ENCODE measurements at regions of chr4 and their contacts with region 1.

Region 1: DNA sequence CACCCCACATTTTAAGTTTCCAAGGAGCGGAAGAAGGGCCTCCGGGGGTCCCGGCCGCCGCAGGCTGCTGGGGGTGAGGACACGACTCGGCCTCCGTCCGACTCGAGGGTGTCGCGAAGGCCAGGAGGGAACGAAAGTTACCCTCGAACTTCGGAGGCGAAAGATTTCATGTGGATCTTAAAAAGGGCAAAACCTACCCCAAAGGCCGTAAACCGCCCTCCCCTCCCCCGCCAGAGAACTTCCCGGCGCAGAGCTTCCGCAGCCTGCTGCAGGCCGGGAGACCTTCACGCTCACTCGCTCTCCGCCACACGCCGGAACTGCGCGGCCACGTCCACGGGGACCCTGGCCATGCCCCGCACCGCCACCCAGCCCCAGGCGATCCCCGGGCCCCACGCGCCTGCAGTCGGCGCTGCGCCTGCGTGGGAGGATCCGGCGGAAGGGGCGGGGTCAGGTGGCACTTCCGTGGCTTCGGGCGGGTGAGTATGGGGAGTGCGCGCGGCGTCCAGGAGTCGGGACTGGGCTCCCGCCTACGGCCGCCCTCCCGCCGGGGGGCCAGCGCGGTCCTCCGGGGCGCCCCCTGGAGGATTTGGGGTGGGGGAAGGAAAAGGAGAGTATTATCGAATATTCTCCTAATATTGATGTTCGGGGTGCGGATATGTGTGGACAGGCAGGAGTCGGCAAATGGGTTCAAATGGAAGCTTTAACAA is at the start of gene MMAA:
- DNase-seq: peak; percentile 91
- ATAC-seq: peak; percentile 95
- H3K4me3 ChIP-seq: peak within 1 kb of the TSS; percentile 65
- H3K27ac ChIP-seq: peak within 1 kb of the TSS; percentile 93
- H3K4me1 ChIP-seq: no peaks in the 10 kb centered on the region; the same call in 1 of the 2 replicates
- H3K27me3 ChIP-seq: no peaks in the 10 kb centered on the region
- CTCF ChIP-seq: peak; percentile 70
- POLR2A ChIP-seq: peak; percentile 90
- RAD21 ChIP-seq: peak; percentile 46
- total RNA-seq, gene MMAA: 5.2 and 7.8 TPM in 2 replicates

Region 2: DNA sequence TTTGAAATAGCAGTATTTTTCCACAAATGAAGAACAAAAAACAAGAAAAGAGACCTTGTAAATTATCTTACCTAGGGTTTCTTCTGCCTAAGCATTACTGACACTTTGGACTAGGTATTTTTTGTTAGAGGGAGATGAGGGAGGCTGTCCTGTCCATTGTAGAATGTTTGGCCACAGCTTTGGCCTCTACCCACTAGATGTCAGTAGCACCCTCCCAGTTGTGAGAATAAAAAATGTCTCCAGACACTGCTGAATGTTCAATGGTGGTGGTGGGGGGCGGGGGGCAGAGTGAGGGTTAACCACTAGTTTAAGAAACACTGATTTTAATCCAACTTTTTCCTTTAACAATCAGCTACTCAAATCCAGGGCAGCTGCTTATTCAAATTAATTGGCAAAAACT is 464.5 kb before region 1 on chr4:
- CTCF ChIA-PET with region 1: no interaction called
- POLR2A ChIA-PET with region 1: no interaction called
- dilution Hi-C with region 1: no loop called
- in situ Hi-C with region 1: no loop called
- intact Hi-C with region 1: loop called (anchors 1 kb)
- DNase-seq: peak; percentile 35
- ATAC-seq: peak; percentile 77
- H3K4me3 ChIP-seq: no peak overlapping the region
- H3K27ac ChIP-seq: no peak overlapping the region
- H3K4me1 ChIP-seq: no peaks in the 10 kb centered on the region
- H3K27me3 ChIP-seq: no peaks in the 10 kb centered on the region
- CTCF ChIP-seq: peak; percentile 50
- POLR2A ChIP-seq: no peak
- RAD21 ChIP-seq: peak; percentile 60

Region 3: GRCh38 chr4:145216535-145216934 is 402.6 kb before region 1 on chr4:
- CTCF ChIA-PET with region 1: interaction called, 18 read pairs
- POLR2A ChIA-PET with region 1: no interaction called
- dilution Hi-C with region 1: no loop called
- in situ Hi-C with region 1: loop called (anchors 25 kb)
- intact Hi-C with region 1: no loop called
- DNase-seq: peak; percentile 44
- ATAC-seq: no peak
- H3K4me3 ChIP-seq: no peak overlapping the region
- H3K27ac ChIP-seq: no peak overlapping the region
- H3K4me1 ChIP-seq: no peaks in the 10 kb centered on the region
- H3K27me3 ChIP-seq: peaks cover 3% of the 10 kb centered on the region; the same call in 1 of the 2 replicates
- CTCF ChIP-seq: peak; percentile 79
- POLR2A ChIP-seq: no peak
- RAD21 ChIP-seq: peak; percentile 84

Region 4: DNA sequence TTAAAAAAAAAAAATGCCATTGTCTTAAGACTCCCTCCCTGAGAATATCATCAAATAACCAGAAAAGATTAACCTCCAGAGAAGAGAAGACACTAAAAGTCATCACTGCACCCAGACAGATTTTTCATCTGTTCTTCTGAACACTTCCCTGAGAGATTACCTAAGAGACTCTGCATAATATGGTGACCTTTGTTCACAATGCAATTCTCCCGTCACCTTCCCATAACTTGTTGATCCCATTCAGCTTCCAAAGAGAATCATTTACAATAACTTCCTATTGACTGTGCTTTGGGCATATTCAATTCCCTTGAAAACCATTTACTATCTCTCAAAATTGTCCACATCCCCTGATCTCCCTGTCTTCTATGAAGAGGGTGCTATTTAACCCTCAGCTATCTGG is 222.5 kb before region 1 on chr4:
- CTCF ChIA-PET with region 1: no interaction called
- POLR2A ChIA-PET with region 1: no interaction called
- dilution Hi-C with region 1: no loop called
- in situ Hi-C with region 1: no loop called
- intact Hi-C with region 1: no loop called
- DNase-seq: no peak
- ATAC-seq: no peak
- H3K4me3 ChIP-seq: no peak overlapping the region
- H3K27ac ChIP-seq: no peak overlapping the region
- H3K4me1 ChIP-seq: no peaks in the 10 kb centered on the region
- H3K27me3 ChIP-seq: no peaks in the 10 kb centered on the region
- CTCF ChIP-seq: no peak
- POLR2A ChIP-seq: no peak
- RAD21 ChIP-seq: no peak

Region 5: GRCh38 chr4:145732895-145733880 is 114.1 kb after region 1 on chr4:
- CTCF ChIA-PET with region 1: no interaction called
- POLR2A ChIA-PET with region 1: no interaction called
- dilution Hi-C with region 1: no loop called
- in situ Hi-C with region 1: no loop called
- intact Hi-C with region 1: loop called (anchors 1 kb)
- DNase-seq: peak; percentile 89
- ATAC-seq: peak; percentile 80
- H3K4me3 ChIP-seq: peak overlapping the region; percentile 57
- H3K27ac ChIP-seq: peak overlapping the region; percentile 92
- H3K4me1 ChIP-seq: peaks cover 28% of the 10 kb centered on the region
- H3K27me3 ChIP-seq: no peaks in the 10 kb centered on the region
- CTCF ChIP-seq: no peak
- POLR2A ChIP-seq: peak; percentile 75
- RAD21 ChIP-seq: no peak

Region 6: DNA sequence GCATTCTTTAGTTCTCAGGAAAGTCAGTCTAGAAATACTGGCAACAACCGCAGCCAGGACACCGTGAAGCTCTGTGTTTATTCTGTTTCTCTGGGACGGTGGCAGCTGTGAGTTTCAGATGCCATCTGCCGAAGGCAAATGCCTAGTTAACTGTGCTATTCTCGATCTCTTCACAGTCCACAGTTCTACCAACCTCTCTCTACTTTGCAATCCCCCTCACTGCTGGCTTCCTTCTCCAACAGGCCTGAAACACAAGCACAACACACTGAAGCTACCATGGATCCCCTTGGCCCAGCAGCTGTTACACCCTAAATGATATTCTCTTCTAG is 200.7 kb after region 1 on chr4:
- CTCF ChIA-PET with region 1: no interaction called
- POLR2A ChIA-PET with region 1: interaction called, 4 read pairs
- dilution Hi-C with region 1: no loop called
- in situ Hi-C with region 1: no loop called
- intact Hi-C with region 1: loop called (anchors 5 kb)
- DNase-seq: no peak
- ATAC-seq: no peak
- H3K4me3 ChIP-seq: no peak overlapping the region
- H3K27ac ChIP-seq: peak overlapping the region; percentile 62; the same call in 1 of the 2 replicates
- H3K4me1 ChIP-seq: peaks cover 23% of the 10 kb centered on the region
- H3K27me3 ChIP-seq: no peaks in the 10 kb centered on the region
- CTCF ChIP-seq: no peak
- POLR2A ChIP-seq: no peak
- RAD21 ChIP-seq: no peak

Region 7: DNA sequence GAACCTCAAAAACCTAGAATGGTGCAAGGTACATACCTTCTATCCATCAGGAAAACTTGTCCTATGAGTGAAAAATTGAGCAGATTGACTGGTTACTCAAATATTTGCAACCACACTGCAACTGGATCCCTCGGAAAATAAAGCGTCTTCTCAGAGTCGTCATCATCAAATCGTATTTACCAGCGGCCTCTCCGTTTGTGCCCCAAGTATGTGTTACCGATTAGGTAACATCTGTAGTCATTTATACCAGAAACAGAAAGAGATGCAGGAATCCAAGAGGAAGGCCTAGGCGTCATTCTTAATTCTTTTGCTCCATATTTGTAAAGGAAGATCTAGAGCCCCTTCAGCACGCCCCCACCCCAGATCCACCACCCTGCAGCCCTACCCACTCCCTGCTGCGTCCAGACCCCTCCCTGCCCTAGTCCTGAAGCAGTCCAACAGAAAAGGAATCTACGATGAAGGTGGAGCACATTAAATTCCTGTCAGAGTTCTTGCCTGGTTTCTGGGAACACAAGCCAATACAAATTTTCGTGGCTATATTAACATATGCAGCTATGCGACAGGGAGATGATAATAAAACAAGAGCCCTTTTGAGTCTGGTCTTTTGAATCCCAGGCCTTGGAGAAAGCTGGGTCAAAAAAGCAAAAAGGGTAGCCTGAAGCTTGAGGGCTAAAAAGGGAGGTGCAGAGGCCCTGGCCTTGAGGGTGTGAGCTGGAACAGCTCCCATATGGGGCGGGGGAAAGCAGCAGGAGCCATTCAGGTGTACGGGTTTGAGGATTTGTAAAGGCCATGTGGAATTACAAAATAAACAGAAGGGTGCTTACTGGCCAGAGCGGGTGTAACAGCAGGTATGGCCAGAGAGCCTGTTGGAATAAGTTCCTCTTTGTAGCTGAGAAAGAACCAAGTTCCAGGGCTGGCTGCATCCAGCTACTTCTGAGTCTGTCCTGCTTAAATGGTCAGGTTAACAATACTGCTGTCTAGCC is 242.5 kb after region 1 on chr4:
- CTCF ChIA-PET with region 1: no interaction called
- POLR2A ChIA-PET with region 1: no interaction called
- dilution Hi-C with region 1: no loop called
- in situ Hi-C with region 1: no loop called
- intact Hi-C with region 1: no loop called
- DNase-seq: no peak
- ATAC-seq: no peak
- H3K4me3 ChIP-seq: no peak overlapping the region
- H3K27ac ChIP-seq: no peak overlapping the region
- H3K4me1 ChIP-seq: no peaks in the 10 kb centered on the region; the same call in none of the 2 replicates
- H3K27me3 ChIP-seq: no peaks in the 10 kb centered on the region
- CTCF ChIP-seq: no peak
- POLR2A ChIP-seq: no peak
- RAD21 ChIP-seq: no peak

Region 8: GRCh38 chr4:145936142-145936996 is 317.3 kb after region 1 on chr4:
- CTCF ChIA-PET with region 1: no interaction called
- POLR2A ChIA-PET with region 1: no interaction called
- dilution Hi-C with region 1: no loop called
- in situ Hi-C with region 1: no loop called
- intact Hi-C with region 1: loop called (anchors 2 kb)
- DNase-seq: peak; percentile 73
- ATAC-seq: peak; percentile 44
- H3K4me3 ChIP-seq: peak overlapping the region; percentile 82
- H3K27ac ChIP-seq: peak overlapping the region; percentile 97
- H3K4me1 ChIP-seq: peaks cover 5% of the 10 kb centered on the region
- H3K27me3 ChIP-seq: no peaks in the 10 kb centered on the region
- CTCF ChIP-seq: peak; percentile 29
- POLR2A ChIP-seq: no peak
- RAD21 ChIP-seq: peak; percentile 10; the same call in 1 of the 2 replicates

Region 9: GRCh38 chr4:146175541-146176453 is 556.7 kb after region 1 on chr4 and contains the start of gene LSM6:
- CTCF ChIA-PET with region 1: no interaction called
- POLR2A ChIA-PET with region 1: no interaction called
- dilution Hi-C with region 1: no loop called
- in situ Hi-C with region 1: no loop called
- intact Hi-C with region 1: loop called (anchors 1 kb)
- DNase-seq: peak; percentile 85
- ATAC-seq: peak; percentile 96
- H3K4me3 ChIP-seq: peak within 1 kb of the TSS; percentile 60
- H3K27ac ChIP-seq: peak within 1 kb of the TSS; percentile 53
- H3K4me1 ChIP-seq: peaks cover 3% of the 10 kb centered on the region; the same call in 1 of the 2 replicates
- H3K27me3 ChIP-seq: no peaks in the 10 kb centered on the region
- CTCF ChIP-seq: 0 out of 2 replicates have a peak, but pooled peaks have one; percentile 5
- POLR2A ChIP-seq: no peak
- RAD21 ChIP-seq: no peak
- total RNA-seq, gene LSM6: 13.4 and 33.1 TPM in 2 replicates

Measured in IMR-90 (cell line).